Adrenal gland (tissue), 19 donors: ENCODE measurements at regions of chr3 and their contacts with region 1.

Region 1: GRCh38 chr3:44323341-44323955 is 15.1 kb upstream of the TCAIM start:
- DNase-seq: peak; percentile 63 to 91 (median 72)
- H3K4me3 ChIP-seq: no peak overlapping the region
- H3K27ac ChIP-seq: no peak overlapping the region
- H3K4me1 ChIP-seq: no peaks in the 10 kb centered on the region
- H3K27me3 ChIP-seq: no peaks in the 10 kb centered on the region
- CTCF ChIP-seq: peak; percentile 70 to 91 (median 81)
- POLR2A ChIP-seq: no peak

Region 2: DNA sequence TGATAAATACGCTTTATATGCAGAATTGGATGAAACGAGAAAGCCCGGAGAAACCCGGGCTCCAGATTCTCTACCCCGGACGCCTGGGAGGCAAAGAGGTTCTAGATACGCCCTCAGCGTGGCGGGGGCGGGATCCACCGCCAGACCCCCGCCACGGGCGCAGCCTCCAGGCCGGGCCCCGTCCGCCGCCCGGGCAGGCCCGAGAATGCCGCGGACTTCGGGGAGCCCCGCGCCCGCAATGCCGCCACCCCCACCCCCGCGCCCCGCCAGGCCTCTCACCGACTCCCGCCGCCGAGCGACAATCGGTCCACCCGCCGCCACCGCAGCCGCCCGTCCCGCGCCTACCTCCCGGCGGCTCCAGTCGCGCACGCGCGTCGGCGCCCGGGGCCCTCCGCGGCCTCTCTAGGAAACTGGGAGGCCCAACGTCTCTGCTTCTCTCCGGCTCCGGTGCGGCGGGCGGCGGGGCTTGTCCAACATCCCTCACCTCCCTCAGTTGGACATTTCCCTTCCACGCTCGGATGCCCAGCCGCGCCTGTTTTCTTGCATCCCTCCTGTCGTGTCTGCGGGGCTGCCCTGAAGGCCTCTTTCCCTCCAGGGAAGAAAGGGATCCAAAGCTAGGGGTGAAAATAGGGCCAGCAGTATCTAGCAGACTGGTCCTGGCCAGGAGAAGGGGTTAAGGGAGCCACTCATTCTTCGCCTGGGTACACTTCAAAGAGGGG is 154.0 kb after region 1 on chr3 and contains the start of gene ZNF445:
- intact Hi-C with region 1: loop called in 1 of 2 experiments (anchors 10 kb)
- DNase-seq: peak; percentile 75 to 83 (median 76)
- H3K4me3 ChIP-seq: peak within 1 kb of the TSS; percentile 7 to 95 (median 40)
- H3K27ac ChIP-seq: peak within 1 kb of the TSS in 4 of 5 donors; percentile 40 to 91 (median 72)
- H3K4me1 ChIP-seq: peaks cover 12 to 24% of the 10 kb centered on the region in 2 donors
- H3K27me3 ChIP-seq: no peaks in the 10 kb centered on the region
- CTCF ChIP-seq: no peak
- POLR2A ChIP-seq: peak in 1 of 2 donors; percentile 35
- total RNA-seq, gene ZNF445: 5.8 to 21.1 (median 10.0) TPM

Region 3: DNA sequence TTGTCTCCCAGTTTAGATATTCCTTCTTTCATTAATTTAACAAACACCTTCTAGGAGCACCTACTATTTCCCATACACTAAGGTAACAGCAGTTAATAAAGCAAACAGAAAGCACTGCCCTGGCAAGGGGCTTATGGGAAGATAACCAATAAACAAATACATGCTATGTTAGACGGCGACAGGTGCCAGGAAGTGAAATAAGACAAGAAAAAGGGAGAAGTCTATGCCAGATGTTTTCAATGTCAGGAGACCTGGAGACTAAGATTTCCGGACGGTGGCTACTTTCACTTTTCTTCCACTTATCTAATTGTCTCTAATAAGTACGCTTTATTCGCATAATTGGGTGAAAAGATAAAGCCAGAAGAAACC is 186.5 kb after region 1 on chr3:
- intact Hi-C with region 1: loop called in 1 of 2 experiments (anchors 10 kb)
- DNase-seq: peak in 1 of 7 donors; percentile 24
- H3K4me3 ChIP-seq: peak overlapping the region; percentile 25 to 93 (median 60)
- H3K27ac ChIP-seq: peak overlapping the region; percentile 80 to 93 (median 87)
- H3K4me1 ChIP-seq: peaks cover 8 to 16% of the 10 kb centered on the region in 2 donors
- H3K27me3 ChIP-seq: no peaks in the 10 kb centered on the region
- CTCF ChIP-seq: no peak
- POLR2A ChIP-seq: no peak